IMR-90 (cell line): ENCODE measurements at regions of chr2 and their contacts with region 1.

Region 1: GRCh38 chr2:171056307-171056706 is 104.4 kb downstream of the TLK1 start:
- DNase-seq: peak; percentile 66
- ATAC-seq: peak; percentile 85
- H3K4me3 ChIP-seq: no peak overlapping the region
- H3K27ac ChIP-seq: no peak overlapping the region
- H3K4me1 ChIP-seq: no peaks in the 10 kb centered on the region
- H3K27me3 ChIP-seq: no peaks in the 10 kb centered on the region
- CTCF ChIP-seq: no peak
- POLR2A ChIP-seq: no peak
- RAD21 ChIP-seq: no peak

Region 2: GRCh38 chr2:171044416-171044815 is 11.9 kb before region 1 on chr2:
- CTCF ChIA-PET with region 1: no interaction called
- POLR2A ChIA-PET with region 1: no interaction called
- dilution Hi-C with region 1: no loop called
- in situ Hi-C with region 1: no loop called
- intact Hi-C with region 1: loop called (anchors 1 kb)
- DNase-seq: no peak
- ATAC-seq: no peak
- H3K4me3 ChIP-seq: no peak overlapping the region
- H3K27ac ChIP-seq: no peak overlapping the region
- H3K4me1 ChIP-seq: peaks cover 2% of the 10 kb centered on the region; the same call in 1 of the 2 replicates
- H3K27me3 ChIP-seq: no peaks in the 10 kb centered on the region
- CTCF ChIP-seq: no peak
- POLR2A ChIP-seq: no peak
- RAD21 ChIP-seq: no peak

Region 3: GRCh38 chr2:171416009-171416926 is 360.0 kb after region 1 on chr2:
- CTCF ChIA-PET with region 1: no interaction called
- POLR2A ChIA-PET with region 1: no interaction called
- dilution Hi-C with region 1: no loop called
- in situ Hi-C with region 1: no loop called
- intact Hi-C with region 1: loop called (anchors 5 kb)
- DNase-seq: peak; percentile 98
- ATAC-seq: peak; percentile 94
- H3K4me3 ChIP-seq: no peak overlapping the region; the same call in 1 of the 2 replicates
- H3K27ac ChIP-seq: no peak overlapping the region
- H3K4me1 ChIP-seq: peaks cover 7% of the 10 kb centered on the region
- H3K27me3 ChIP-seq: no peaks in the 10 kb centered on the region
- CTCF ChIP-seq: peak; percentile 91
- POLR2A ChIP-seq: peak; percentile 54; the same call in 1 of the 2 replicates
- RAD21 ChIP-seq: peak; percentile 98

Region 4: DNA sequence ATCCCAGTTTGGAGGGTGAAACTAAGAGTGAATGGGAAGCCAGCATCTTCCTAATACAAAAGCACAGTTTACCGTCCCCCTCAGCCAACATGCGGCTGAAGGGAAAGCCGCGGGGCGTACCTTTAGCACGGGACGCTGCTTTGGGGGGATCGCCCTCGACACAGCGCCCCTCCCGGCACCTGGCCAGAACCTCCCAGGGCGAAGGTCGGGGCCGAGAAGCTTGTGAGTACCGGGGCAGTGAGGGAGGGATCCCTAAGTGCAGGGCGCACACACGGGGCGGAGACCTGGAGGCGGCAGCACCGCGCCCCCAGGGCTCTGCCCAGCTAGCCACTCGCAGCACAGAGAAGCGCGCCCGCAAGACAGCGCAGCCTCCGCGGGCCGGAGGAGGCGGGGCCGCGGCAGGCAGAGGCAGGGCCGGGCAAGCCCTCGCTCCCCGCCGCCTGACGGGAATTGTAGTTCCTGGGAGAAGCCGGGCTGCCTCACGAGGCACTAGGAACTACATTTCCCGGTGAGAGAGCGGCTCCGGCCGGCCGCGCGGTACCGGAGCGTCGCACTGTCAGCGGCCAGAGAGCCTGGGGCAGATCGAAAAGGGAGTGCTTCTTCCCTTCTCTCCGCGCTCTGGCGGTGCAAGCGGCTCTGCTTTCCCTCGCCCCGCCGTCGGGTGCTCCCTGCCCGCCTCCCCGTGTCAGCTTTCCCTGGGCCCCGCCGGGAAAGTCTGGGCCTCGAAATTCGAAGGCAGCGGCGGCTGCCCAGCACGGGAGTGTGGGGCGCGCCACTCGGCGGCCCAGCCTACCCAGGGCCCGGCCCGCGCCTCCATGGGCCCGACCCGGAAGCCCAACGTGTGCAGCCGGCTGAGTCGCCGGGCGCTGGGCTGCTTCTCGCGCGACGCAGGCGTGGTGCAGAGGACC is 377.7 kb after region 1 on chr2 and contains the starts of genes DCAF17 and METTL8:
- CTCF ChIA-PET with region 1: no interaction called
- POLR2A ChIA-PET with region 1: no interaction called
- dilution Hi-C with region 1: no loop called
- in situ Hi-C with region 1: no loop called
- intact Hi-C with region 1: no loop called
- DNase-seq: peak; percentile 94
- ATAC-seq: peak; percentile 98
- H3K4me3 ChIP-seq: peak within 1 kb of the TSS; percentile 93
- H3K27ac ChIP-seq: peak within 1 kb of the TSS; percentile 81
- H3K4me1 ChIP-seq: peaks cover 9% of the 10 kb centered on the region
- H3K27me3 ChIP-seq: no peaks in the 10 kb centered on the region
- CTCF ChIP-seq: 0 out of 2 replicates have a peak, but pooled peaks have one; percentile 5
- POLR2A ChIP-seq: peak; percentile 55; the same call in 1 of the 2 replicates
- RAD21 ChIP-seq: no peak
- total RNA-seq, gene DCAF17: 13.1 and 22.8 TPM in 2 replicates
- total RNA-seq, gene METTL8: 10.6 and 20.0 TPM in 2 replicates